Left lung (tissue), 14 donors: ENCODE measurements at regions of chr14 and their contacts with region 1.

Region 1: DNA sequence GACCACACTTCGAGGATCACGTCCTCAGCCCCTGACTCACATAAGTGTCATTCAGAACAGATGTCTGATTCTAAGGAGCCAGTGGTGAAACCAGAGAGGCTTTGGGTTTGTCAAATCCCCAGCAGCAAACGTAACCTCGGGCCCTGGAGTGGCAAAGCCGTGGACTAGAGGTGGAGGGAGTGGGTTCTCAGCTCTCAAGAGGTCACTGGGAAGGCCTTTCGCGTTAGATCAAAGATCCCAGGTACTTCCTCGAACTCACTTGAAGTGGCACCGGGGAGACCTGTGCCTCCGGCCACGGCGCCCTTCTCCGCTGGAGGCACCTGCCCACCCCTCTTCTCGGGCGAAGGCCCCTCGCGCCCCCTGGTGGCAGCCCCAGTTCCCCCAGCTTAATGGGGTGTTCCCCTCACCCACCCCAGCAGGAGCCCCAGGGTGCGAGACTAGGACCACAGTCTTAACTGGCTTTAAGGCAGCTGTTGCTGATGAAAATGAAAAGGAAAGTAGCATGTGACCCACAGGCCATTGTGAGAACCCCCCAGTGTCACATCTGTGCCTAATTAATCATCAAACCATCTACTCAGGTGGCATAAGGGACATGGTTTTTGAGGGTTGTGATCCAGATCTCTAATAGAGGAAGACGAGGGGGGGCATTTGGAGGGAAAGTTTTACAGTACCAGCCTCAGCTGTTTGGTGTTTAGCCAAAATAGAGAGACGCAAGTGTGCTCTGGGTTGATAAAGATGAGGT is 672 bp upstream of the ESR2 start:
- DNase-seq: peak; percentile 43 to 92 (median 74)
- ATAC-seq: peak; percentile 98
- H3K4me3 ChIP-seq: peak overlapping the region; percentile 28 to 31
- H3K27ac ChIP-seq: no peak overlapping the region
- H3K4me1 ChIP-seq: peaks cover 0 to 18% of the 10 kb centered on the region in 2 donors
- H3K27me3 ChIP-seq: peaks cover 14 to 38% of the 10 kb centered on the region in 2 donors
- CTCF ChIP-seq: peak; percentile 70 to 81

Region 2: DNA sequence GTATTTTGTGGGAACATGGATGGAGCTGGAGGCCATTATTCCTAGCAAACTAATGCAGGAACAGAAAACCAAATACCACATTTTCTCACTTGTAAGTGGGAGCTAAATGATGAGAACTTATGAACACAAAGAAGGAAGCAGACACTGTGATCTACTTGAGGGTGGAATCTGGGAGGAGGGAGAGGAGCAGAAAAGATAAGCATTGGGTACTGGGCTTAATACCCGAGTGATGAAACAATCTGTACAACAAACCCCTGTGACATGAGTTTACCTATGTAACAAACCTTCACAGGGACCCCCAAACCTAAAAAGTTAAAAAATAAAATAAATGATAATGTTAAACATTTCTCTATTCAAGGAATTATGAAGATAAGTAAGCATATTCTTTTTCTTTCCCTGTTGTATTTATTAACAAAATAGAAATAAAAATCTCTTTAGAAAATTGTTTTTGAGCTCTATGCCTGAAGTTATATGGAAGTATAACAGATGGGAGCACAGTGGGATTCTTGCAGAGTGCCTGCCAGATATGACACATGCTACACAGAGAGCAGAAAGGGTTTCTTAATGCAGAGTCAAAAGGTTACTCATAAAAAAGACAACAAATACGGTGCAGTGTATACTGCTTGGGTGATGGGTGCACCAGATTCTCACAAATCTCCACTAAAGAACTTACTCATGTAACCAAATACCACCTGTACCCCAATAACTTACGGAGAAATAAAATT is 494.0 kb before region 1 on chr14:
- intact Hi-C with region 1: loop called in 1 of 2 experiments (anchors 10 kb)
- DNase-seq: no peak
- ATAC-seq: no peak
- H3K4me3 ChIP-seq: no peak overlapping the region
- H3K27ac ChIP-seq: no peak overlapping the region
- H3K4me1 ChIP-seq: no peaks in the 10 kb centered on the region
- H3K27me3 ChIP-seq: no peaks in the 10 kb centered on the region
- CTCF ChIP-seq: no peak